T-cell (primary cell): ENCODE measurements at regions of chr7 and their contacts with region 1.

Region 1: DNA sequence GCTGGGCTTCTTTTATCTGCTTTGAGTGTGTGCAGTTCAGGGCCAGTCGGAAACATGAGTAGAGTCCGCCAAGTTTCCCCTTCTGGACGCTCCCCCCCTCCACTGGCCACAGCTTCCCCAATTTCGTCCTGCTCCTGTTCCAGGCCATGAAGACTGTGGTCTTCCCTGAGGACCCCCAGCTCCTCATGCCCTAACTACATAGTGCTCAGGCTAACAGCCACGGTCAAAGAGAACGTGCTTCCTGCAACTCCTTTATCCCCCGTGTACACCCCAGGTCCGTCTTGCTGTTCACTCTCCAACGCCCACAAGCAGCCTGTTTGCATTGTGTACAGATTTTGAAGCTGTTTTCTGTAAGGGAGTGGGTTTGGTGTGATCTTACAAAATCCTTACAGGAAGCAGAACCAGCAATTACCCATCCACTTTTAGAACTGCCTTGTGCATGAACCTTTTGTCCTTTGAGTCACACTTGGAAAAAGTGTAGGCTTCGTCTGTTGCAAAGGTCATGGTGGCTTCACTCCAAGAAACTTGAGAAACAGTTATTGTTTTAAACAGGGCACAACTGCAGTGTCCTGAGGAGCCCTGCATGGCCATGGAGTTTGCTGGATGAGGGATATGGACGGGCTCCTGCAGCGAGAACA is 77.0 kb upstream of the FAM20C start:
- DNase-seq: no peak
- ATAC-seq: no peak
- H3K4me3 ChIP-seq: no peak overlapping the region
- H3K4me3 Mint-ChIP-seq: no peak overlapping the region
- H3K27ac ChIP-seq: no peak overlapping the region
- H3K27ac Mint-ChIP-seq: no peak overlapping the region
- H3K4me1 ChIP-seq: peaks cover 0 to 4% of the 10 kb centered on the region in 2 experiments
- H3K4me1 Mint-ChIP-seq: peaks cover 0 to 2% (median 0%) of the 10 kb centered on the region in 3 donors
- H3K27me3 ChIP-seq: peaks cover 0 to 50% of the 10 kb centered on the region in 2 experiments
- H3K27me3 Mint-ChIP-seq: peaks cover 47 to 58% of the 10 kb centered on the region in 2 donors

Region 2: GRCh38 chr7:64098-64915 is 51.1 kb before region 1 on chr7:
- CTCF ChIA-PET with region 1: no interaction called
- POLR2A ChIA-PET with region 1: no interaction called
- DNase-seq: peak in 3 of 35 experiments; percentile 8 to 15 (median 9)
- ATAC-seq: no peak
- H3K4me3 ChIP-seq: no peak overlapping the region
- H3K4me3 Mint-ChIP-seq: no peak overlapping the region
- H3K27ac ChIP-seq: no peak overlapping the region
- H3K27ac Mint-ChIP-seq: no peak overlapping the region
- H3K4me1 ChIP-seq: no peaks in the 10 kb centered on the region
- H3K4me1 Mint-ChIP-seq: no peaks in the 10 kb centered on the region
- H3K27me3 ChIP-seq: peaks cover 0 to 47% of the 10 kb centered on the region in 2 experiments
- H3K27me3 Mint-ChIP-seq: peaks cover 2 to 4% of the 10 kb centered on the region in 2 donors

Region 3: DNA sequence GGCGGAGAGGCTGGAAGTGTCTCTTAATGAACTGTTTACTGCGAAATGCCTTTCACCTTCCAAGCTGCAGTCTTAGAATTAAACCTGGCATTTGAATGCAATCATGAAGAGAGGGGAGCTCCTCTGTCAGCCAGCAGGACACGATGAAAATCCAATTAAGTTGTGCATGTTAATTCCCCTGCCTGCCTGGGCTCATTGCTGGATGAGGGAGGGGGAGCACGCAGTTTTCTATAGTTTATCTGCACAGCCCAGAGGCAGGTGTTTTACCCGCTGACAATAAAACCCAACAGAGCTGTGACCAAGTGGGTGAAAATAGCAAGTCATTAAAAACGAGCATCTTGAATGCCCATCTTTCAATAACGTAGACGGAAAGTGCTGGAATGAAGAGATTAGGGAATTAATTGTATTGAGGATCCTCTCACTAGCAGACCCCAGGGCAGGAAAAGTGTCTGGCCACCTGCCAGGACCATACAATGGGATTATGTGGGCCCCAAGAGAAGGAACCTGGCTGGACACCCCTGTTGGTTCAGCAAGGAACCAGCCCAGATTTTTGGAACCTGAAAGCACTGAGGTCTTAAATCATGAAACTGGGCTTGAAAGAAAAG is 23.1 kb before region 1 on chr7:
- CTCF ChIA-PET with region 1: no interaction called
- POLR2A ChIA-PET with region 1: no interaction called
- DNase-seq: no peak
- ATAC-seq: no peak
- H3K4me3 ChIP-seq: no peak overlapping the region
- H3K4me3 Mint-ChIP-seq: no peak overlapping the region
- H3K27ac ChIP-seq: no peak overlapping the region
- H3K27ac Mint-ChIP-seq: no peak overlapping the region
- H3K4me1 ChIP-seq: peaks cover 0 to 5% of the 10 kb centered on the region in 2 experiments
- H3K4me1 Mint-ChIP-seq: peaks cover 5 to 10% (median 7%) of the 10 kb centered on the region in 3 donors
- H3K27me3 ChIP-seq: peaks cover 0 to 26% of the 10 kb centered on the region in 2 experiments
- H3K27me3 Mint-ChIP-seq: peaks cover 5 to 28% of the 10 kb centered on the region in 2 donors

Region 4: DNA sequence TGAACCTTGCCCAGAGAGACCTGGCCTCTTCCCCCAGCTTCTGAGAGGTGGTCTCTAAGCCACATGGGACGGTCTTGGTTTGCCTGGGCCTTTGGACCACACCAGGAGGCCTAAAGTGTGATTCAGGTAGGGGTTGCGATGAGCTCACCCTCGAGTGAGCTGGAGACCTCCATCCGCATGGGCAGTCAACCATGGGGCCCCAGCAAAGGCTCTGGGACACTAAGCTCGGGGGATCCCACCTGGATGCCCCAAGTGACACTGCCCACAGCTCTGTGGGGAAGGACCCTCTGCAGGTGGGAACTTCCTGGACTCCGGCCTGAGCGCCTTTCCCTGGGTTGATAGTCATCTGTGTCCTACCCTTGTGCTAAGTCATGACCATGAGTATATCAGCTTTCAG is 19.9 kb after region 1 on chr7:
- CTCF ChIA-PET with region 1: no interaction called
- POLR2A ChIA-PET with region 1: interaction called in 1 of 2 experiments, 11 read pairs
- DNase-seq: no peak
- ATAC-seq: no peak
- H3K4me3 ChIP-seq: no peak overlapping the region
- H3K4me3 Mint-ChIP-seq: no peak overlapping the region
- H3K27ac ChIP-seq: no peak overlapping the region
- H3K27ac Mint-ChIP-seq: no peak overlapping the region
- H3K4me1 ChIP-seq: no peaks in the 10 kb centered on the region
- H3K4me1 Mint-ChIP-seq: no peaks in the 10 kb centered on the region
- H3K27me3 ChIP-seq: peaks cover 0 to 48% of the 10 kb centered on the region in 2 experiments
- H3K27me3 Mint-ChIP-seq: peaks cover 11 to 19% of the 10 kb centered on the region in 2 donors

Region 5: DNA sequence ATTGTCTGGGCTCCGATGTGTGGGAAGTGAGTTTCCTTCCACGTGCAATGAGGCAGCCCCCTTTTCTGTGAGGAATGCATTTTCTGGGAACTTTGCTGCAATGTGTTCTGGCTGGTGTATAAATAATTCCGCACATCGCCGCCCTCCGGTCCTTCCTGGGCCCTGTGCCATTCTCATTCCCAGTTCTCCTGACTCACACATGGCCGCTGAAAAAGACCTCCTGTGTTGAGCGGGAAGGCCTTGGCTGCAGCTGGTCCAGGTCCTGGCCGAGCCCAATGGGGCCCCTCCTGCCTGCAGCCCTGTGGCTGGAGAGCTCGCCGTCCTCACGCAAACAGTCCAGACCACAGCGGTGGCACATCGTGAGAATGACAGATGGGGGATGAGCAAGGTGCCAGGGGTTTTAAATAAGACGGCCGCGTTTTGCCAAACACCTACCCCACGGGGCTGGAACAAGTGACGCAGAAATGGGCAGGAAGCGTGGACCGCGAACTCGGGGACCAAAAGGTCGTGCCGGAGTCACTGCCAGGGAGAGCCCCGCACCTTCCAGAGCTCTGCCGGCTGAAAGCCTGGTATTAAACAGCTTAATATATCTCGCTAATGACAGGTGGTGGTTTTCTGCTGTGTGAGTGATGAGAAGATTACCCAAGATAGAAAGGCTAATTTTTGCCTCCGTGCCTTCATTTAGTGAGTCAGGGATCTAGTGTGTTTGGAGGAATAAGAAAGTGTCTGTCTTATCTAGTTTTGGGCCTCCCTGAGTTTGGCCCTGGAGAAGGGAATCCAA is 114.0 kb after region 1 on chr7:
- CTCF ChIA-PET with region 1: no interaction called
- POLR2A ChIA-PET with region 1: no interaction called
- DNase-seq: no peak
- ATAC-seq: no peak
- H3K4me3 ChIP-seq: no peak overlapping the region
- H3K4me3 Mint-ChIP-seq: no peak overlapping the region
- H3K27ac ChIP-seq: no peak overlapping the region
- H3K27ac Mint-ChIP-seq: no peak overlapping the region
- H3K4me1 ChIP-seq: no peaks in the 10 kb centered on the region
- H3K4me1 Mint-ChIP-seq: no peaks in the 10 kb centered on the region
- H3K27me3 ChIP-seq: peaks cover 0 to 30% of the 10 kb centered on the region in 2 experiments
- H3K27me3 Mint-ChIP-seq: peaks cover 4 to 12% of the 10 kb centered on the region in 2 donors